Right ventricle myocardium inferior (tissue), 1 donor: ENCODE measurements at regions of chr11 and their contacts with region 1.

Region 1: DNA sequence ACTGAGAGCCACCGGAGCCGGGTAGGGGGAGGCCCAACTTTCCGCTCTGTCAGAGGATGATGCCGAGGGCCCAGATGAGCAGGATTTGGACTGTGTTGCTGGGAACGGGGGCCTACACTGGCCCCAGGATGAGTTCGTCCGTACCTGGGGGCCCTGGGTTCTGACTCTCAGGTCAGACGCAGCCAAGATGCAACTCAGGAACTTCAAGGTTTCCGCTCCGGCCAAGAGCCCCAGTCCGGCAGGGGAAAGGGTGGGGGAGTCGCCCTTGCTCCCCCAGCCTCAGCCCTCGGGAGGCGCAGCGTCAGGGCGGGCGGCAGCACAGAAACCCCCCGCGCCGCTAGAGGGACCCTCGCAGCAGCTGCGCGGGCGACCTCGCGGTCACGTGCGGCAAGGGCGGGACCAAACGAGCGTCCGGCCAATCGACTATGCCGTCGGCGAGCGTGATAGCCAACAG is 241 bp upstream of the ARL2 start:
- DNase-seq: peak; percentile 97
- ATAC-seq: peak; percentile 93

Region 2: DNA sequence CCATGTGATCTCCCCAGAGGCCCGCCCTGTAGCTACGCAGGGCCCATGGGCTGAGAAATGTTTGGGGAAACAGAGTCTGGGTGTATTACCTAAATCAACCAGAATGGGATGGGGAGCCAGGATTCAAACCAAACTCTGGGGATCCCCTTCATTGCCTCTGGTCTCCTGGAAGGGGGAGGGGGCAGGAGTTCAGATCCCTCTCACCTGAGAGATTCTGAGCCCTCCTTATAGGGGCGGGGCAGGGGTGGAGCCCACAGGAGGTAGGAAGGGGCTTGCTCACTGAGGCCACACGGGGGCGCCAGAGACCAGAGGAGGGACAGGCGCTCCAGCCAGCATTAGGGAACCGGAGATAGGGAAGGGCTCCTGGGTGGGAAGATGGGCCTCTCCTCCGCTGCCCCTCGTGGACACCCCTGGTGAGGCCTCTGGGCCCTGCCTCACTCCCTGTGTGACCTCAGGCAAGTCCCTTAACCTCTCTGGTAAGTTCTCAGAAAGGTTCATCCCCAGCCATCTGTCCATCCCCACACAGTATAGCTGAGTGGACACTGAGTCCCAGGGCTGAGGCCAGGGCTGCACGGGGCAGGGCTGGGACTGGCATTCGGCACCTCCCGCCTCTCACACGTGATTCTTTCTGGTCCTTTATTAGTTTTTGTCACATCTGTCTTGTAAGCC is 166.6 kb before region 1 on chr11:
- intact Hi-C with region 1: loop called (anchors 5 kb)
- DNase-seq: peak; percentile 95
- ATAC-seq: peak; percentile 91

Region 3: DNA sequence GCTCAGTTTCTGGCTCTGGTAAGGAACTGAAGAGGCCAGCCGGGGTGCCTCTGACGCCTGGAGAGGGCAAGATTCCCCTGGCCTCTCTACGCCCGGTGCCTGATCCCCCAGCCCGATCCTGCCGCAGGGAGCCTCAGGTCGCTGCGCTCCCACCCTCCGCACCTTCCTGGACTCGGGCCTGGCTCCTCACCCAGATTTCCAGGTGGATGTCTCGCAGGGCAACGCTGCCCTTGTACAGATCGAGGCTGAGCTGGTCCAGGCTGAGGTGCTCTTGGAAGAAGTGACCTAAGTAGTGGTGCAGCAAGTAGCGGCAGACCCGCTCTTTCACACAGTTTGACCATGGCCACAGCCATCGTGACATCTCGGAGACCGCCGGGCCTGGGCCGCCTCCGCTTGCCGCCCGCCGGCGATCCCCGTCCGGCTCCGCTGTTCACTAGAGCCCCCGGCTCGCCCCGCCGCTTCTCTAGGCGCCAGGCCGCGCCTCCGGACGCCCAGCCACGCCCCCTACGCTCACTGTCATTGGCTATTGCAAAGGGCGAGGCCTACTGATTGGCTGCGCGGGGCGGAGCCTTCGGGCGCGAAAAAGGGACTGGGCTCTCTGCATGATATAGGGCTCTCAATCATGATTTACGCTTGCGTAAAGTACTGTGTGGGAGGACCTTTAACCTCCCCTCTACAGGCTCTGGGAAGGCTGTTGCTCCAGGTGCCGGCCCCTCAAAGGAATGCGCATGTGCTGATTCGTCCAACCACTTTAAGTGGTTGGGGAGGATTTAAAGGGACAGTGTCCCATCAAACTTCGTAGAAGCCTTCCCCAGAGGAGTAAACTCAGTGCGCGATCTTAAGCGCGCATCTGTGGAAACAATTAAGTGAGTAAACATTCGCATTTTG is 96.7 kb before region 1 on chr11 and contains the start of gene ATG2A:
- intact Hi-C with region 1: loop called (anchors 5 kb)
- DNase-seq: peak; percentile 100
- ATAC-seq: peak; percentile 99
- total RNA-seq, gene ATG2A: 10.7 TPM

Region 4: DNA sequence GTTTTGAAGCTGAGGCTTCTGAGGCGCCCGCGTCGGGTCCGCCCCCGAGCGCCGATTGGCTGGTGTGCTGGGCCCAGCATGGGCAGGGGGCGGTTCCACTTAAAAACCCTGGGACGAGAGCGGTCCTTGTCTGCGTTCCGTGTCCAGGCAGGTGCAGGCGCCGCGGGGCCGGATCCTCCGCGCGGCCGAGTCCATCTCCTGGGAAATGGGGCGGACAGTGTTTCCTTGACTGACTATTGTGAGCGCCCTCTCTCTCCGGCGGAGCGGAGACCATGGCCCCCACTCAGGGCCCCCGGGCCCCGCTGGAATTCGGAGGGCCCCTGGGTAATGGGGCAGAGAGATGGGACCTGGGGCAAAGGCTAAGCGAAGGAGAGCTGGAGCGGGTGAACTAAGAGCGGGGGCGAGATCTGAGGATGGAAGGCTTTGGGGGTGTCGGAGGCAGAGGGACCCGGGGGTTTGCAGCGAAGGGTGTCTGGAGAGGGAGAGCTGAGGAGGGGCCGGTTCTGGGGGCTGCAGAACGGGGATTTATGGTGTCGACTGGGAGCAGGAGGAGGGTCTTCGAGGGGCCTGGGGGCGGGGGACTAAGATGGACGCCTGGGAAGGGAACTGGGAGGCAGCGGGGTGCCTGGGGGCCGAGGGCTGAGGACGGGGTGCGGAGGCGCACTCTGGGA is 98.2 kb after region 1 on chr11 and contains the start of gene TM7SF2:
- intact Hi-C with region 1: loop called (anchors 2 kb)
- DNase-seq: peak; percentile 99
- ATAC-seq: peak; percentile 92
- total RNA-seq, gene TM7SF2: 53.1 TPM

Region 5: DNA sequence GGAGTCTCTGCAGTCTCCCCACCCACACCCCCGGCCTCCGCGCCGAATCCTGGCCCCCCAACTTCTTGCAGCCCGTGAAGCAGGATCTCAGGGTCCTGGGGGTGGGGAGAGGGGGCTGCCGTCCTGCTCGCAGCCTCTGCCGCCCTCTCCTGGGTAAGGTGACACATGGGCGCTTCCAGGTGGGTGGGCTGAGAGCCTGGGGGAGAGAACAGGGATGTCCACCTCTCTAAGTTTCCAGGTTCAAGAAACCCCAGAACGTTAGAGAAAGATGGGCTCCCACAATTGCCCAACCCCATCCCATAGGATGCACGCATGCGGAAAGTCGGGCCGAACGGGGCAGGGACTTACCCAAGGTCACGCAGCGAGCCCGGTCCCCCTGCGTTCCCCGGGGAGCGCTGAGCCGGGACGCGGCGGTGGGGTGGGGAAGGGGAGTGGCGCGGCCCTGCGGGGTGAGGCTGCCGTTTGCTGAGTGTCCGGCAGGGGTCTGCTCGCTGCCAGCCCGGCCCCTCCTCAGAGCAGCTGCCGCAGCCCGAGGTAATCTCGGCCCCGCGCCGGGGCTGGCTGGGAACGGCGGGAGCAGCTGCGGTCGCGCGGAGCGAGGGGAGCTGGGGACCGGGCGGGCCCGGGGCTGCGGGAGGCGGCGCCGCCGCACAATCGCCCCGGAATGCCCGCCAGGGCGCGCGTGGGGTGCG is 167.3 kb after region 1 on chr11:
- intact Hi-C with region 1: loop called (anchors 5 kb)
- DNase-seq: peak; percentile 80
- ATAC-seq: peak; percentile 52